ENCODE measurements at regions of chr20 and their contacts with region 1.

Region 1: GRCh38 chr20:38730989-38731737 is 6.9 kb downstream of the SLC32A1 start:
- DNase-seq: peak; percentile 78 to 82 (median 80)
- H3K4me3 ChIP-seq: peak overlapping the region in 6 of 7 experiments; percentile 6 to 68 (median 24)
- H3K27ac ChIP-seq: no peak overlapping the region
- H3K4me1 ChIP-seq: peaks cover 0 to 41% (median 20%) of the 10 kb centered on the region in 4 experiments
- H3K27me3 ChIP-seq: peaks cover 16 to 99% (median 58%) of the 10 kb centered on the region in 5 experiments

Region 2: GRCh38 chr20:38658879-38659596 is 72.1 kb before region 1 on chr20:
- CTCF ChIA-PET with region 1: interaction called, 11 read pairs
- POLR2A ChIA-PET with region 1: no interaction called
- DNase-seq: peak in 2 of 3 donors; percentile 24 to 32
- H3K4me3 ChIP-seq: no peak overlapping the region
- H3K27ac ChIP-seq: no peak overlapping the region
- H3K4me1 ChIP-seq: no peaks in the 10 kb centered on the region
- H3K27me3 ChIP-seq: peaks cover 0 to 62% (median 5%) of the 10 kb centered on the region in 5 experiments

Measured in common myeloid progenitor, CD34-positive (primary cell).